BJ (cell line): ENCODE measurements at regions of chr9 and their contacts with region 1.

Region 1: GRCh38 chr9:130060296-130060695 is 6.6 kb downstream of the GPR107 start:
- DNase-seq: no peak
- H3K4me3 ChIP-seq: no peak overlapping the region
- H3K27me3 ChIP-seq: no peaks in the 10 kb centered on the region
- CTCF ChIP-seq: no peak

Region 2: DNA sequence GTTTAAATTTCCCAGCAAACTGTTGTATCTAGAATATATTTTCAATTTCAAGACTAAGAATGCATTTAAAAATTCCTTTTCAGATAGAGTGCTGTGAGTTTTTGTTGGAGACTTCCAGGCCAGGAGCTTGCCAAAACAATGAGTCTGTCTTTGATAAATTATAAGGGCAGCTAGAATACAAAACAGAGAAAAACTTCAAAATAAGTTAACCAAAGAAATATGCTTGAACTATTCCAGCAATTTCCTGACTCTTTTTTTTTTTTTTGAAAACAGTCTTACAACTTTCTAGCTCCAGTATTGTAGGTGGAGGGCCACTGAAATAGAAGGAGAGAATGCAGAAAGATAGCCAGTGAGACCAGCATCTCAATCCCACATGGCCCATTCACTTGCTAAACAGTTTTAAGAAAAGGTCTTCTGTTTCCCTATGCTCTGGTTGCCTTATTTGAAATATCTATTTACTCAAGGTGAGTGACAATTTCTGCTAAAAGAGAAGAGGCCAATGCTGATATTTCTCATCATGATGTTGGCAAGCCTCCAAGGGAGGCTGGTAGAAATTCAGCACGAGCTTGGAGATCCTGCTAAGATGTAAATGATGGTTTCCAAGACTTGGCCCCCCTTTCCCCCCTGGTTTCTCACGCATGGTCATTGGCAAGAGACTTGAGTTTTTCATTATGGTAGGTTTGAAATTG is 121.9 kb before region 1 on chr9:
- CTCF ChIA-PET with region 1: no interaction called
- POLR2A ChIA-PET with region 1: no interaction called
- DNase-seq: peak; percentile 66
- H3K4me3 ChIP-seq: no peak overlapping the region
- H3K27me3 ChIP-seq: no peaks in the 10 kb centered on the region
- CTCF ChIP-seq: no peak

Region 3: GRCh38 chr9:130073373-130073772 is 13.1 kb after region 1 on chr9:
- CTCF ChIA-PET with region 1: interaction called, 8 read pairs
- POLR2A ChIA-PET with region 1: interaction called, 16 read pairs
- DNase-seq: no peak
- H3K4me3 ChIP-seq: no peak overlapping the region
- H3K27me3 ChIP-seq: no peaks in the 10 kb centered on the region
- CTCF ChIP-seq: no peak

Region 4: DNA sequence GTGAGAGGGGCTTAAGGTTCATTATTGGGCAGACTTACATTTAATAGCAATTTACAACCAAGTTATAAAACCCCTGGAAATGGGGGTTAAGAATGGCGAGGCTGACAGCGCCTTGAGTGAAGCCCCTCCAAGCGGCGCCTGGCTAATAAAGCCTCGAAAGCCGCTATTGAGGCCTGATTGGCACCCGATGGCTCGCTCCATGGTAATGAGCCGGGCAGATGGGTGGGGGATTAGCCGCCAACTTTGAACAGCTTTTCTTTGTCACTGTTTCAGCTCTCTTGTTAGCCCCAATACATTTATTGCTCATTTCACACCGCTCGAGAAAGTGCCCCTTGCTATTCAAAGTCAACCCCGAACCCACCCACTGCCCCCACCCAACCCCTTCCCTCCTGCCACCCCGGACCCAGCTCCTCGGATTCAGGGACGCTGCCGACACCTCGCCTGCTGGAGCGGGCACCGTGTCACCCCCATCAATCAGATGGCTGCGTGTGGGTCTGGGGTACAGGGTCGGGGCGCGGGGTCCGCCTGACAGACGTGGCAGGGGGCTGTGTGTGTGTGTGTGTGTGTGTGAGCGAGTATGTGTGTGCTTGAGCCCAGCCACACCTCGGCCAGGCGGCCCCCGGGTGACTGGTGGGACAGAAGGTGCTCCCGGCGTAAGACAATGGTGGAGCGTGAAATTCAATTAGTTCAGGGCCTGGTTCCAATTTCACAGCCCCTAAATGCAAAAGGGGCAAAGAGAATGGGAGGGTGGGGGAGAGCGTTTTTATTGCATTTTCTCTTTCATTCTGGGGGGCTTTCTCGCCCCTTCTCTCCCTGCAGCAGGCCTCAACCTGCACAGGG is 418.7 kb after region 1 on chr9:
- CTCF ChIA-PET with region 1: no interaction called
- POLR2A ChIA-PET with region 1: no interaction called
- DNase-seq: no peak
- H3K4me3 ChIP-seq: no peak overlapping the region
- H3K27me3 ChIP-seq: no peaks in the 10 kb centered on the region
- CTCF ChIP-seq: no peak